Activated B cell treated with CpG ODN at 0.5 μM for 24 hours (primary cell): ENCODE measurements at regions of chr7 and their contacts with region 1.

Region 1: DNA sequence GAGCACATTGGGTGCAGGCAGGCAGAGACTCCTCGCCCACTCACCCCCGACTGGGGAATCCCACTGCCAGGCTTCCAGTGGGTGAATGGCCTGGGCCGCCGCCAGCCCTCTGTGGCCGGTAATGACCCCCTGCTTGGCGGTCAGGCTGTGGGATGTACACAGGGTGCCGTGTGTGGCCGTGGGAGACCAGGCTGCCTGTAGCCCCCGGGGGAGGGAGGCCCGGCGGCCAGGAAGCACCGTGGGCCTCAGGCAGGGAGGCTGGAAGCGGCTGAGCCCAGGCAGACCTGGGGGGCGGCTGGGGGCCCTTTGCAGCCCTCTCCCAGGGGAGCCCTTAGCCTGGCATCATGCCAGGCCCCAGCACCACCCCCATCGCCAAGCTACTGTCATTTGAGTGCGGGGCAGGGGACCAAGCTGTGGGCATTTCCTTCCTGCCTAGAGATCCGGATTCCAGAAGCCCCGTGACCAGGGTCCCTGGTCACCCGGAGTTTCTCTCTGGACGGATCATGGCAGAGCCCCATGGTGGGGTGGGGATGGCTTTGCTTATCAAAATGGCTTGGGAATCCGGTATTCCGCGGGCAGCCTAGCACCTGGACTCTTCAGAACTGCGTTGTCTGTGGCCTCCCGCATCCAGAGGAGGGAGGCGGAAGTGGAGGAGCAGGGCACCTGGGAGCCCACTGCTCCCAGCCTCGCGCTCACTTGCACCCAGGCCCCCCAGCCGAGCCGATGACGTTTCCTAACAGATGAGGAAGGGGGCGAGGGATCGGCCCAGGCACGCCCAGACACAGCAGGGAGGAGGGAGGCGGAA is 1.1 kb downstream of the TTYH3 start:
- DNase-seq: peak; percentile 45
- ATAC-seq: no peak
- H3K4me3 Mint-ChIP-seq: peak overlapping the region; percentile 87
- H3K27ac Mint-ChIP-seq: peak overlapping the region; percentile 70
- H3K4me1 Mint-ChIP-seq: peaks cover 42% of the 10 kb centered on the region
- H3K27me3 Mint-ChIP-seq: peaks cover under 1% of the 10 kb centered on the region
- CTCF ChIP-seq: no peak

Region 2: DNA sequence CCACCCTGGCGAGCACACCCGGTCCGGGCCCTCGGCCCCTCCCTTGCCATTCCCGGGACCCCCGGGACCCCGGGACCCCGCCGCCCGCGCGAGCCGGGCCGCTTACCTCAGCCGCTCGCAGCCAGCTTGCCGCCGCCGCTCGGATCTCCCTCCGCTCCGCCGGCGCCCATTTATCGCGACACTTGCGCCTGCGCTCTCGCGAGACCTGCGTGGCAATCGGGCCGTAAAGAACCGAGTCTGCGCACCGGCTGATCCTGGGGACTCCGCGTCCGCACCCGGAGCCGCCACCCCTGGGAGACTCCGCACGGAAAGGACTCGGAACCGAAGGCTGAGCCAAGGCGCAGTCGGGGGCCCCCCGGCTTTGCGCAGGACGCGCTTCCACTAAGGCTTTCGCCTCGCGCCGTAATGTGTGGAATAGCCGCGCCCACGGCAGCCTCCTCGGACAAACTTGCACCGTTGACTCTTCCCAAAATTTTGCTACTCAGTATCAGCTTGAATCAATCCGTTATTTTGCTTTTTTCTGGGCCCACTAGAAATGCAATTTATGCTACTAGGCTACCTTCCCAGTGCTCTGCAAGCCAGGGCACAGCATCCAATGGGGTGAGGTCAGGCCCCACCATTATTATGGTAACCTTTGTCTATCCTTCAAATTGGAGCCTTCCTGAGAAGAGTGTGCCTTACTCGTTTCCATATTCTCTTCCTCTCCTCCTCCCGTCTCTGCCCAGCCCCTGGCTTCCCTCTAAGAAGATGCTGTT is 400.0 kb before region 1 on chr7 and contains the start of gene MAD1L1:
- CTCF ChIA-PET with region 1: no interaction called
- POLR2A ChIA-PET with region 1: no interaction called
- intact Hi-C with region 1: loop called (anchors 10 kb)
- DNase-seq: peak; percentile 88
- ATAC-seq: peak; percentile 68
- H3K4me3 Mint-ChIP-seq: peak within 1 kb of the TSS; percentile 90
- H3K27ac Mint-ChIP-seq: peak within 1 kb of the TSS; percentile 81
- H3K4me1 Mint-ChIP-seq: peaks cover 61% of the 10 kb centered on the region
- H3K27me3 Mint-ChIP-seq: no peaks in the 10 kb centered on the region
- CTCF ChIP-seq: no peak
- total RNA-seq, gene MAD1L1: 54.6 and 65.7 TPM in 2 replicates

Region 3: DNA sequence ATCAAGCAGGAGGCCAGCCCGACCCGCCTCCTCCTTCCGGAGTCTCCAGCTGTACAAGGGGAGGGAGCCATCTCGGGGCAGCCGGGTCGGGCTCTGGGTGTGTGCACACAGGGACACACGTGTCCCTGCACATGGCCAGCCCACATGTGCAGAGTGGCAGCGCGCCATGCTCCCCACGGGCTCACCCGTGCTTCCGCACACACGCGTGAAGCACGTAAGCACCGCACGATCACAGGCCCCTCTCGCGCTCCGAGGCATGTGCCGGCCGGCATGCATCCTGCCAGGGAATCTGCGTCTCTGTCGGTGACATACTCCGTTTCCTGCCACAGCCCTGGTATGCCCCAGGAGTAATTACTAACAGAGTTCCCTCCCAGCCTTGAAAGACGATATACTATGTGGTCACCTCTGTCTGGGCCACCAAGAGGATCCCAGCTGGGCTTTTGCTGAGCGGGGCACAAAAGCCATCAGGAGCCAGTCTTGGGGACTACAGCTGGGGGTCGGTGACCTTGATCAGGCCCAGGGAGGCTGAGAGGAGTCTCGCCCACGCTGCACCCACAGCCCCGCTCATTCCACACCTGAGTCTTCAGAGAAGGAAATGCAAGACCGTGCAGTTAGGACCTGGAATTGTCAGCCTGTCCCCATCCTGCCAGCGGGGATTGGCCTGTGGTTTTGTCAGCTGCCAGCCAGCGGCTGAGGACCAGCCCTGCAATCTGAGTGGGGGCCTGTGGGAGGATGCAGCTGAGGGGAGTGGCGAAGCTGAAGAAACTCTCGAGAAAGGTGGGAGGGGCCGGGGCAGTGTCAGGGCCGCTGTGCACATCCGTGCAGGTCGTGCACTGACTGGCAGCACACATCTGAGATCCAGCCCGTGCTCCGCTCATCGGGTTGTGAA is 124.4 kb before region 1 on chr7:
- CTCF ChIA-PET with region 1: no interaction called
- POLR2A ChIA-PET with region 1: interaction called, 25 read pairs
- intact Hi-C with region 1: loop called (anchors 1 kb)
- DNase-seq: peak; percentile 62
- ATAC-seq: peak; percentile 51
- H3K4me3 Mint-ChIP-seq: peak overlapping the region; percentile 65
- H3K27ac Mint-ChIP-seq: peak overlapping the region; percentile 95
- H3K4me1 Mint-ChIP-seq: peaks cover 68% of the 10 kb centered on the region
- H3K27me3 Mint-ChIP-seq: no peaks in the 10 kb centered on the region
- CTCF ChIP-seq: no peak

Region 4: GRCh38 chr7:2555121-2556052 is 77.5 kb before region 1 on chr7 and contains the start of gene BRAT1:
- CTCF ChIA-PET with region 1: no interaction called
- POLR2A ChIA-PET with region 1: interaction called, 6 read pairs
- intact Hi-C with region 1: loop called (anchors 1 kb)
- DNase-seq: peak; percentile 89
- ATAC-seq: peak; percentile 86
- H3K4me3 Mint-ChIP-seq: peak within 1 kb of the TSS; percentile 87
- H3K27ac Mint-ChIP-seq: peak within 1 kb of the TSS; percentile 92
- H3K4me1 Mint-ChIP-seq: peaks cover 45% of the 10 kb centered on the region
- H3K27me3 Mint-ChIP-seq: no peaks in the 10 kb centered on the region
- CTCF ChIP-seq: no peak
- total RNA-seq, gene BRAT1: 29.6 and 31.7 TPM in 2 replicates

Region 5: DNA sequence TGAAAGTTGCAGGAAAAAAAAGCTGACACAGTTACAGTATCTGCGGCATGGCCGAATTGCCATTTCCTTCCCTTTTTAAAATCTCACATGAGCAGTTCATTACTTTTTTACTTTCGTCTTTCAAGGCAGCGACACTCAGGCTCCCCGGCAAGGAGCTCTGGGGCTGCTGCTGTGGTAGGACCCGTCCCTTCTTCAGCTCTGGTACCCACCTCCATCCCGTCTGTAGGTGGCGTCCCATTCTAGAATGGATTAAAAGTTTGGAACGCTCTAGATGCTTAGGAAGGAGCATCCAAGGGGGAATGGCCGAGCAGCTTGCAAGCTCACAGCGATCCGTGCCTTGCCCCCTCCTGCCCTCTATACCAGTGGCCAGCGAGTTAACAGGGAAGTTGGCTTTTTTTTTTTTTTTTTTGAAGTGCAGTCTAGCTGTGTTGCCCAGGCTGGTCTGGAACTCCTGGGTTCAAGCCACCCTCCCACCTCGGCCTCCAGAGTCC is 24.0 kb before region 1 on chr7:
- CTCF ChIA-PET with region 1: no interaction called
- POLR2A ChIA-PET with region 1: interaction called, 9 read pairs
- intact Hi-C with region 1: loop called (anchors 1 kb)
- DNase-seq: no peak
- ATAC-seq: peak; percentile 93
- H3K4me3 Mint-ChIP-seq: peak overlapping the region; percentile 71
- H3K27ac Mint-ChIP-seq: peak overlapping the region; percentile 50
- H3K4me1 Mint-ChIP-seq: peaks cover 27% of the 10 kb centered on the region
- H3K27me3 Mint-ChIP-seq: no peaks in the 10 kb centered on the region
- CTCF ChIP-seq: no peak

Region 6: DNA sequence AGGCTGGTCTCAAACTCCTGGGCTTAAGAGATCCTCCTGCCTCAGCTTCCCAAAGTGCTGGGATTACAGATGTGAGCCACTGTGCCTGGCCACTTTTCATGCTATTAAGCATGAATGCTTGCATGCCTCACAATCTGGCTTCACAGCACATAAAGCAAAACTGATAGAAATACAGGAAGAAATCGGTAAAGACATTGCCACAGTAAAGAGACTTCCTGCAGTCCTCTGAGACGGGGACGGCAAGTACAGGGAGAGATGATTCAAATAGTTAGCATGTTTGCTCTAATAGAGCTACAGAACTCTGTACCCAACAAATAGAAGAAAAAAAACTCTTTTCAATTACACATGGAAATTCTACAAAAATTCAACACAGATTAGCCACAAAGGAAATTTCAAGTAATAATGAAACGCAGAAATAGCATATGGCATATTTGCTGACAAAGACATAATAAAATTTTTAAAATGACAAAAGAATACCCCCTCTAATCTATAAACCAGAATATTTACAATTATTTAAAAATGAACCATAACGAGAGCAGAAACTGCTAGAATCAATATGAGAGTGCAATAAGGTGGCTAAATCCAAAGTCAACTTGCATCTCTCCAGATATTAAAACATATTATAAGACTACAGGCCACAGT is 378.4 kb after region 1 on chr7:
- CTCF ChIA-PET with region 1: no interaction called
- POLR2A ChIA-PET with region 1: no interaction called
- intact Hi-C with region 1: no loop called
- DNase-seq: no peak
- ATAC-seq: no peak
- H3K4me3 Mint-ChIP-seq: no peak overlapping the region
- H3K27ac Mint-ChIP-seq: peak overlapping the region; percentile 32
- H3K4me1 Mint-ChIP-seq: peaks cover 58% of the 10 kb centered on the region
- H3K27me3 Mint-ChIP-seq: no peaks in the 10 kb centered on the region
- CTCF ChIP-seq: no peak